K562 (cell line): ENCODE measurements at regions of chrX and their contacts with region 1.

Region 1: DNA sequence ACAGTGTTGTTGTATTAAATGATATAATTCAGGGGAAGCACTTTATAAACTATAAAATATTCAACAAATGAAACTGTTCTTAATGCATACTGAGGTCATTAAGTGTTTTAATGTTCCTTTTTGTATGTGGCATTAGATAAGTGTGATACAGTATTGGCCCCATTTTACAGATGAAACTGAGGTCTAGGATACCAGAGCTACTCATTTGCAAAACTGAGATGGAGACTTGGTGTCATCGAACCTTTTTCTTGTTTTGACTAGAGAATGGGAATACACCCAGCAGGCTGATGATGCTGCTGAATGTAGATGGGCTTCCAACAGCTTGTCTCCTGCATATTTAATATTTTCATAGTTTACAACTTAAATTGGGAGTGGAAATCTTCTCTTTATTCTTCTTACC is 34.6 kb downstream of the TAF1 start:
- DNase-seq: no peak
- ATAC-seq: no peak
- H3K4me3 ChIP-seq: no peak overlapping the region
- H3K27ac ChIP-seq: no peak overlapping the region
- H3K4me1 ChIP-seq: no peaks in the 10 kb centered on the region
- H3K27me3 ChIP-seq: no peaks in the 10 kb centered on the region
- CTCF ChIP-seq: no peak
- EP300 ChIP-seq: no peak
- POLR2A ChIP-seq: no peak
- RAD21 ChIP-seq: no peak

Region 2: DNA sequence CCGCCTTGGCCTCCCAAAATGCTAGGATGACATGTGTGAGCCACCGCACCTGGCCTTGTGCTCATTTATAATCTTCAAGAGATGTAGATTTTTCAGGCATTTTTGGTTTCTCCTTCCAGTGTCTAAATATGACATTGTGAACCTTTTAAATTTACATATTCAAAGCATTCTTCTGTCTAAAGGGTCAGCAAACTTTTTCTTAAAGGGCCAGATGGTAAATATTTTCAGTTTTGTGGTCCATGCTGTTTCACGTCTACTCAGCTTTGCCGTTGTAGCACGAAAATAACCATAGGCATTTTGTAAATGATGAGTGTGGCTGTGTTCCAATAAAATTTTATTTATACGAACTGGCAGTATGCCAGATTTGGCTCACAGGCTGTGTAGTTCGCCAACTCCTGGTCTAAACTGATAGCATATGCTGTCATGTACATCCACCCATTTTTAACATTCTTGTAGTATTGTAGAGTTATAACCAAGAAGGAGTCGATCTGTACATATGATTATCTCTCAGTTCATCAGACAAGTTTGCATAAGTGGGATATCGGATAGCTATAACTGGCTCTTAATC is 164.8 kb after region 1 on chrX:
- CTCF ChIA-PET with region 1: no interaction called
- POLR2A ChIA-PET with region 1: no interaction called
- in situ Hi-C with region 1: no loop called
- intact Hi-C with region 1: loop called (anchors 10 kb)
- DNase-seq: peak in 1 of 4 experiments; percentile 19
- ATAC-seq: no peak
- H3K4me3 ChIP-seq: no peak overlapping the region
- H3K27ac ChIP-seq: no peak overlapping the region
- H3K4me1 ChIP-seq: no peaks in the 10 kb centered on the region; a peak in 1 of 5 replicates
- H3K27me3 ChIP-seq: no peaks in the 10 kb centered on the region
- CTCF ChIP-seq: no peak
- EP300 ChIP-seq: no peak
- POLR2A ChIP-seq: no peak
- RAD21 ChIP-seq: no peak

Region 3: DNA sequence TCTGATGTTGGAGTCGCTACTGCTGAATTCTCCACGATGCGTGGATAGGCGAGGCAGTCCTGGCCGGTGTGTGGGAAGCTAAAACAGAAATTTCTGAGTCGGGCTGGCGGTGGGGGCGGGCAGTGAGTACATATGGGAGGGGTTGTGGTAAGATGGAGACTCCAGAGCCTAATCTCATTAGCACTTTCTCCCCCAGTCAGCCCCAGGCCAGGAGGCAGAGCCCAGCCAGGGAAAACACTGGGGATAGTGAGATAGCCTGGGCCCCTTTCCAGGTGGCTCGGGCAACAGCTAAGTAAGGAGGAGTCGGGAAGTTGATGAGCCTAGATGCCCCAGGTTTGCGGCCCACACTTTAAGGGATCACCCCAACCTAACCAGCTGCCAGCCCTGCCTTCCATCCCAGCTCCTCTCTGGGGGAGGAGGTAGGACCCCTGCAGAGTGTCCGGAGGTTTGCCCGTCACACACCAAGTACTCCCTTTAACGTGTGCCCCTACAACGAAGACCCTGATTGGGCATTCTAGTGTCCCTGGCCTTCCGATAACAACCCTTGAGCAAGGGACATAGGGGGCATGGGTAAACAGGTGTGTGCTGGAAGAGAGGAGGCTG is 264.3 kb after region 1 on chrX:
- CTCF ChIA-PET with region 1: no interaction called
- POLR2A ChIA-PET with region 1: no interaction called
- in situ Hi-C with region 1: no loop called
- intact Hi-C with region 1: no loop called
- DNase-seq: no peak
- ATAC-seq: no peak
- H3K4me3 ChIP-seq: no peak overlapping the region
- H3K27ac ChIP-seq: no peak overlapping the region
- H3K4me1 ChIP-seq: peaks cover 0 to 16% of the 10 kb centered on the region in 2 experiments; a peak in 3 of 5 replicates
- H3K27me3 ChIP-seq: peaks cover 4 to 31% of the 10 kb centered on the region in 2 experiments; a peak in 3 of 5 replicates
- CTCF ChIP-seq: no peak
- EP300 ChIP-seq: no peak
- POLR2A ChIP-seq: no peak
- RAD21 ChIP-seq: no peak